HepG2 (cell line): ENCODE measurements at regions of chr17 and their contacts with region 1.

Region 1: DNA sequence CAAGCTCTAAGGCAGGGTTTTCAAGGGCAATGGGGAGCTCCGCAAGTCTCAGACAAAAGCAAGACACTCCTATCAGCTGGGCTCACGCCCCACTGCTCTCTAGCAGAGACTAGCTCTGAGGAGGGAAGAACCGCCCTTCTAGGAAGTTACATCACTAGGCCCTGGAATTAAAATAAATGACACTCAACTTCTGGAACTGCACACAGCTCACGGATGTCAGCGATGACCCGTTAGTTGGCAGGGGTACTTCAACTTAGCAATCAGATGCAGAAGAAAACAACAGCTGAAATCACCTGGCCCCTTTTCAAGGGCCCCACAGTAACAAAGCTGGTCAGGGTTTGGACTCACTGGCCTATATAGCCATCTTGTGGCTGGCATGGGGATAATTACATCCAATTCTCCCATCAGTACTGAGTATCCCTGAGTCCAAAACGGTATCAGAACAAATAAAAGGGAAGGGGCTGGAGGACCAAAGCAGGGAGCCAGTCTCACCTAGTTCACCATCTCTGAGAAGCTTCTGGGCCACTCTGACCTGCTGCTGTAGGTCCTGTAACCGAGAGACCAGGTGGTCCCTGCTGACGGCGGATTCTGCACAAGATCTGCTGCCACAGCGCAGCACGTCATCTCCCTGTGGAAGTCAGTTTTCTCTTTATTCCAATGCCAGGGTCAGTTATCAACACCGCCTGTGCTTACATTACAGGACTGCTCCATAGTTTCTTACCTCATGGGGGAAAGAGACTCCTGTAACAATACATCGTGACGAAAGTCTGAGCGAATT is 22.2 kb downstream of the SERPINF1 start:
- DNase-seq: peak; percentile 67
- ATAC-seq: peak; percentile 87
- H3K4me3 ChIP-seq: no peak overlapping the region
- H3K27ac ChIP-seq: no peak overlapping the region
- H3K4me1 ChIP-seq: peaks cover 7% of the 10 kb centered on the region
- H3K27me3 ChIP-seq: no peaks in the 10 kb centered on the region
- CTCF ChIP-seq: peak; percentile 83
- EP300 ChIP-seq: no peak
- POLR2A ChIP-seq: no peak
- RAD21 ChIP-seq: peak; percentile 84

Region 2: DNA sequence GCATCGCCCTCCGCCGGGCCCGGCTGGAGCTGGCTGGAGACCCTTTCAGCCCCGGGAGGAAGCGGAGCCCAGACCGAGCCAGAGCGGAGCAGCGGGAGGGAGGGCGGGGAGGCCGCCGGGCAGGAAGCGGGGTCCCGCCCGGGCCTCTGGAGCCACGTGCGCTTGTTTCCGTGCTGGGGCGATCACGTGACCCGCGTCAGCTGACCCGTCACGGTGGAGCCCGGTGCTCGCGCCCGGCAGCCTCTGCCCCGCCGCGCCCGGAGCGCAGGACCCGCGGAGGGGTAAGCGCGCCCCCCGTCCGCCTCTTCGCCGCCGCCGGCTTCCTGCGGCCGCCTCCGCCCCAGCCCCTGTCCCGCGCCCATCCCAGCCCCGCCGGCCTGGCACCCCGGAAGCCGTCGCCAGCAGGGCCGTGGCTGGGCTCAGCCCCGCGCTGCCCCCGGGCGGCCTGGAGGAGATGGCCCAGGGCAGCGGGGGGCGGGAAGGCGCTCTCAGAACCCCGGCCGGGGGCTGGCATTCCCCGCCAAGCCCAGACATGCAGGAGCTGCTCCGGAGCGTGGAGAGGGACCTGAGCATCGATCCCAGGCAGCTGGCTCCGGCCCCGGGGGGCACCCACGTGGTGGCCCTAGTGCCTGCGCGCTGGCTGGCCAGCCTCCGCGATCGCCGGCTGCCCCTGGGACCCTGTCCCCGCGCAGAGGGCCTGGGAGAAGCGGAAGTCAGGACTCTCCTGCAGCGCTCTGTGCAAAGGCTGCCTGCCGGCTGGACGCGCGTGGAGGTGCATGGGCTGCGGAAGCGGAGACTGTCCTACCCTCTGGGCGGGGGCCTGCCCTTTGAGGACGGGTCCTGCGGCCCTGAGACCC is 59.3 kb before region 1 on chr17 and contains the start of gene WDR81:
- CTCF ChIA-PET with region 1: interaction called, 24 read pairs
- POLR2A ChIA-PET with region 1: interaction called, 12 read pairs
- in situ Hi-C with region 1: no loop called
- intact Hi-C with region 1: loop called (anchors 1 kb)
- DNase-seq: peak; percentile 72
- ATAC-seq: peak; percentile 79
- H3K4me3 ChIP-seq: peak within 1 kb of the TSS; percentile 62 to 78 (median 64)
- H3K27ac ChIP-seq: peak within 1 kb of the TSS; percentile 77
- H3K4me1 ChIP-seq: peaks cover 72% of the 10 kb centered on the region
- H3K27me3 ChIP-seq: no peaks in the 10 kb centered on the region
- CTCF ChIP-seq: peak; percentile 32
- EP300 ChIP-seq: peak in 1 of 2 experiments; percentile 38; a peak in 1 of 4 replicates
- POLR2A ChIP-seq: peak in 1 of 2 experiments; percentile 46; a peak in 1 of 4 replicates
- RAD21 ChIP-seq: peak; percentile 42
- total RNA-seq, gene WDR81: 12.5 and 16.7 TPM in 2 replicates

Region 3: DNA sequence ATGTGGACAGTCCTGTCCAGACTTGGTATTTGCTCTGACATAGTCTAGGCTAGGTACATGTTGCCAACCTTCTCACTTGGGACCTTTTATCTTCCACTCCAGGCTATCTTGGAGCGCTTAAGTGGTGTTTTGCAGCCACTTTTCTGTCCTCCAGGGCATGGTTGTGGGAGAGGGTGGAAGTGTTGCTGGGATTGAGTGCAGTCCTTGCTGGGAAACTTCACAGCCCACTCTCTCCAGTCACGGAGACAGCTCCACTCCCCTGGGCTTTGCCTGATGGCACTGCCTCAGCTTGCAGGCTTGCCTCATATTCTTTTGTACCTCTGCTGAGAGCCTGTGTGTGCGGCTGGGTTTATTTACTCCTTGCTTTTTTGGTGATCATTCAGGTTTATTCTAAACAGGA is 63.2 kb after region 1 on chr17:
- CTCF ChIA-PET with region 1: no interaction called
- POLR2A ChIA-PET with region 1: no interaction called
- in situ Hi-C with region 1: no loop called
- intact Hi-C with region 1: no loop called
- DNase-seq: no peak
- ATAC-seq: no peak
- H3K4me3 ChIP-seq: no peak overlapping the region
- H3K27ac ChIP-seq: no peak overlapping the region
- H3K4me1 ChIP-seq: peaks cover 6% of the 10 kb centered on the region
- H3K27me3 ChIP-seq: no peaks in the 10 kb centered on the region
- CTCF ChIP-seq: no peak
- EP300 ChIP-seq: no peak
- POLR2A ChIP-seq: no peak
- RAD21 ChIP-seq: no peak